ENCODE measurements at regions of chr4 and their contacts with region 1.

Region 1: GRCh38 chr4:76179398-76180318 is 31.5 kb upstream of the NUP54 start:
- DNase-seq: peak; percentile 81
- ATAC-seq: peak; percentile 95
- H3K4me3 ChIP-seq: no peak overlapping the region
- H3K27ac ChIP-seq: no peak overlapping the region
- H3K4me1 ChIP-seq: 0 out of 2 replicates have a peak, but pooled peaks cover 1% of the 10 kb centered on the region
- H3K27me3 ChIP-seq: no peaks in the 10 kb centered on the region
- CTCF ChIP-seq: peak; percentile 89
- POLR2A ChIP-seq: no peak
- RAD21 ChIP-seq: peak; percentile 93

Region 2: DNA sequence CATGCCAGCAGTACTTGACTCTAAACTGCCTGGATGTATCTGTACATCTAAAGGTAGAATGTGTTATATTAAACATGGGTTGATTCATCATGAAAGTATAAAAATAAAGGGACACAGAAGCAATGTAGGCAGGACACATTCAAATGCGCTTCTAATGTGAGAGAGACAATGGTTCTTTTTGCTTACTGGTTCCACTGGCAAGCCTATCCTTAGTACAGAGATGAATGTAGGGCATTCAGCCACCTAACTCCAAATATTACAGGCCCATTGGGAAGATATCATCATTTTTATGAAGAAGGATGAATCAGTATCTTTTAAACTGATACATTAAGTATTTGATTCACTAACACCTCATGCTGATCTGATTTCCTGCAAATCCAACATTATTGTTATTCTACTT is 567.4 kb before region 1 on chr4:
- CTCF ChIA-PET with region 1: no interaction called
- POLR2A ChIA-PET with region 1: no interaction called
- dilution Hi-C with region 1: no loop called
- in situ Hi-C with region 1: no loop called
- intact Hi-C with region 1: no loop called
- DNase-seq: no peak
- ATAC-seq: no peak
- H3K4me3 ChIP-seq: no peak overlapping the region
- H3K27ac ChIP-seq: no peak overlapping the region
- H3K4me1 ChIP-seq: no peaks in the 10 kb centered on the region
- H3K27me3 ChIP-seq: no peaks in the 10 kb centered on the region
- CTCF ChIP-seq: no peak
- POLR2A ChIP-seq: no peak
- RAD21 ChIP-seq: no peak

Region 3: GRCh38 chr4:76213415-76214176 is 33.9 kb after region 1 on chr4 and contains the start of gene SCARB2:
- CTCF ChIA-PET with region 1: interaction called, 3 read pairs
- POLR2A ChIA-PET with region 1: no interaction called
- dilution Hi-C with region 1: no loop called
- in situ Hi-C with region 1: no loop called
- intact Hi-C with region 1: loop called (anchors 2 kb)
- DNase-seq: peak; percentile 84
- ATAC-seq: peak; percentile 93
- H3K4me3 ChIP-seq: peak within 1 kb of the TSS; percentile 87
- H3K27ac ChIP-seq: peak within 1 kb of the TSS; percentile 91
- H3K4me1 ChIP-seq: peaks cover 11% of the 10 kb centered on the region
- H3K27me3 ChIP-seq: no peaks in the 10 kb centered on the region
- CTCF ChIP-seq: no peak
- POLR2A ChIP-seq: peak; percentile 63
- RAD21 ChIP-seq: no peak
- total RNA-seq, gene SCARB2: 89.7 and 102 TPM in 2 replicates

Region 4: GRCh38 chr4:76305971-76306881 is 126.6 kb after region 1 on chr4 and contains the start of gene STBD1:
- CTCF ChIA-PET with region 1: interaction called, 9 read pairs
- POLR2A ChIA-PET with region 1: no interaction called
- dilution Hi-C with region 1: no loop called
- in situ Hi-C with region 1: no loop called
- intact Hi-C with region 1: loop called (anchors 2 kb)
- DNase-seq: peak; percentile 49
- ATAC-seq: peak; percentile 83
- H3K4me3 ChIP-seq: peak within 1 kb of the TSS; percentile 82
- H3K27ac ChIP-seq: peak within 1 kb of the TSS; percentile 74
- H3K4me1 ChIP-seq: peaks cover 10% of the 10 kb centered on the region; the same call in 1 of the 2 replicates
- H3K27me3 ChIP-seq: no peaks in the 10 kb centered on the region
- CTCF ChIP-seq: no peak
- POLR2A ChIP-seq: no peak
- RAD21 ChIP-seq: no peak
- total RNA-seq, gene STBD1: 2.2 and 3.0 TPM in 2 replicates

Region 5: GRCh38 chr4:76377911-76378310 is 198.3 kb after region 1 on chr4:
- CTCF ChIA-PET with region 1: interaction called, 14 read pairs
- POLR2A ChIA-PET with region 1: no interaction called
- dilution Hi-C with region 1: no loop called
- in situ Hi-C with region 1: loop called (anchors 10 kb)
- intact Hi-C with region 1: loop called (anchors 1 kb)
- DNase-seq: peak; percentile 61
- ATAC-seq: peak; percentile 79
- H3K4me3 ChIP-seq: no peak overlapping the region
- H3K27ac ChIP-seq: no peak overlapping the region
- H3K4me1 ChIP-seq: no peaks in the 10 kb centered on the region
- H3K27me3 ChIP-seq: peaks cover 8% of the 10 kb centered on the region
- CTCF ChIP-seq: peak; percentile 69
- POLR2A ChIP-seq: no peak
- RAD21 ChIP-seq: peak; percentile 61

Region 6: DNA sequence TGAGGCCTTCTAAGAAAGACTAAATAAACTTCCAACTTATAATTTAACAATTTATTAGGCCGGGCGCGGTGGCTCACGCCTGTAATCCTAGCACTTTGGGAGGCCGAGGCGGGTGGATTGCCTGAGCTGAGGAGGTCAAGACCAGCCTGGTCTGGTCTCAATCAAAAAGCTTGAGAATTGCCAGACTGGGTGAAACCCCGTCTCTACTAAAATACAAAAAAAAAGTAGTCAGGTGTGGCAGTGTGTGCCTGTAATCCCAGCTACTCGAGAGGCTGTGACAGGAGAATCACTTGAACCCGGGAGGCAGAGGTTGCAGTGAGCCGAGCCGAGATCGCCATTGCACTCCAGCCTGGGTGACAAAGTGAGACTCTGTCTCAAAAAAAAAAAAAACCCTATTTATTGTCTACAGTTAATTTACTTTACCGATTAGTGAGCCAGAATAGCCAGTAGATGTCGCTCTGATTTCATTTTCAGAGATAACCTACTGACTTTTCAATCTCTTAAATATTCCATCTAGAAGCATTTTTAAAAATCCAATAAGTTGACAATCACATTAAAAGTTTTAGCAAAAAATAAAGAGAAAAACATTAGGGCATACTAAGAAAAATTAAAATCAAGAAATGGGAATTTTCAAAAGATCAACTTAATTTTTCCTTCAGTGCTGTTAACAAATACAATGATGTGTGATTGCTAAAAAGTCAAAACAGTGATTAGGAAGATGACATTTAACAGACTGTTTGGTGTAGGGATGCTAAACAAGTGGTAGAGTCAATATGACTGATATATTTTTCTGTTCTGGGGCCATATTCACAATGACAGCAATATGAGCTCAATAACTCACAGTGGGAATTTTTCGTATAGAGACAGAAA is 251.1 kb after region 1 on chr4:
- CTCF ChIA-PET with region 1: no interaction called
- POLR2A ChIA-PET with region 1: no interaction called
- dilution Hi-C with region 1: no loop called
- in situ Hi-C with region 1: no loop called
- intact Hi-C with region 1: loop called (anchors 2 kb)
- DNase-seq: peak; percentile 60
- ATAC-seq: peak; percentile 72; the same call in 1 of the 2 replicates
- H3K4me3 ChIP-seq: no peak overlapping the region
- H3K27ac ChIP-seq: no peak overlapping the region
- H3K4me1 ChIP-seq: no peaks in the 10 kb centered on the region
- H3K27me3 ChIP-seq: peaks cover 21% of the 10 kb centered on the region
- CTCF ChIP-seq: peak; percentile 78
- POLR2A ChIP-seq: no peak
- RAD21 ChIP-seq: peak; percentile 76

Region 7: GRCh38 chr4:76504613-76505465 is 325.2 kb after region 1 on chr4:
- CTCF ChIA-PET with region 1: interaction called, 4 read pairs
- POLR2A ChIA-PET with region 1: no interaction called
- dilution Hi-C with region 1: no loop called
- in situ Hi-C with region 1: no loop called
- intact Hi-C with region 1: loop called (anchors 1 kb)
- DNase-seq: peak; percentile 63
- ATAC-seq: peak; percentile 85
- H3K4me3 ChIP-seq: no peak overlapping the region
- H3K27ac ChIP-seq: no peak overlapping the region
- H3K4me1 ChIP-seq: no peaks in the 10 kb centered on the region
- H3K27me3 ChIP-seq: peaks cover 22% of the 10 kb centered on the region
- CTCF ChIP-seq: peak; percentile 69
- POLR2A ChIP-seq: no peak
- RAD21 ChIP-seq: peak; percentile 64

Region 8: DNA sequence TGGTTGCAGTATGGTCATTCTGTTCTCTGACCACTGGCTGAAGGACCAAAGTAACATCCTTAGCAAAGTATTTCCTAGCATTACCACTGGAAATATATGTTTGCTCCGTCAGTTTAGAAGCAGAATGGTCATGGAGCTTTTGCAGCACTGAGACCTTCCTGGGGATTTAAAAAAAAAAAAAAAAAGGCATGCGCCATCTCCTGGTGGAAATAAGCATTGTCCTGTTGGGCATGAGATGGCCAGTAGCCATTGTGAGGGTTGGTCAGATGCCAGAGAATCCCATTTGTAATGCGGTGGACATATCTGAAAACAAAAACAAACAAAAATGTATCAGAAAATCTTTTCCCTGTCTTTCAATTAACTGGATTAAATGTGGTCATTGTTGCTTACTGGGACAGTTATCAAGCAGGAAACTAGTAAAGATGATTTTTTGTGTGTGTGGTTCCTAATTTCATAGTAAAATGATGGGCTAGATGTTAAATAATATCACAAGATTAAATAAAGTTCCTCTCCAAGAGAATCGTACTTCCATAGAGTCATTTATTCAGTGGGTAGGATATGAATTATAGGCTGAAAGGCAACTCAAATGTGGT is 578.7 kb after region 1 on chr4:
- CTCF ChIA-PET with region 1: no interaction called
- POLR2A ChIA-PET with region 1: no interaction called
- dilution Hi-C with region 1: no loop called
- in situ Hi-C with region 1: no loop called
- intact Hi-C with region 1: loop called (anchors 10 kb)
- DNase-seq: peak; percentile 81
- ATAC-seq: no peak
- H3K4me3 ChIP-seq: no peak overlapping the region
- H3K27ac ChIP-seq: peak overlapping the region; percentile 77; the same call in 1 of the 2 replicates
- H3K4me1 ChIP-seq: peaks cover 40% of the 10 kb centered on the region
- H3K27me3 ChIP-seq: no peaks in the 10 kb centered on the region
- CTCF ChIP-seq: peak; percentile 77
- POLR2A ChIP-seq: no peak
- RAD21 ChIP-seq: peak; percentile 67

Measured in IMR-90 (cell line).